ENCODE measurements at regions of chrX and their contacts with region 1.

Region 1: GRCh38 chrX:29044423-29045184 is 457.4 kb downstream of the IL1RAPL1 start:
- DNase-seq: no peak
- ATAC-seq: no peak
- H3K4me3 ChIP-seq: no peak overlapping the region
- H3K27ac ChIP-seq: no peak overlapping the region
- H3K4me1 ChIP-seq: no peaks in the 10 kb centered on the region
- H3K27me3 ChIP-seq: no peaks in the 10 kb centered on the region

Region 2: DNA sequence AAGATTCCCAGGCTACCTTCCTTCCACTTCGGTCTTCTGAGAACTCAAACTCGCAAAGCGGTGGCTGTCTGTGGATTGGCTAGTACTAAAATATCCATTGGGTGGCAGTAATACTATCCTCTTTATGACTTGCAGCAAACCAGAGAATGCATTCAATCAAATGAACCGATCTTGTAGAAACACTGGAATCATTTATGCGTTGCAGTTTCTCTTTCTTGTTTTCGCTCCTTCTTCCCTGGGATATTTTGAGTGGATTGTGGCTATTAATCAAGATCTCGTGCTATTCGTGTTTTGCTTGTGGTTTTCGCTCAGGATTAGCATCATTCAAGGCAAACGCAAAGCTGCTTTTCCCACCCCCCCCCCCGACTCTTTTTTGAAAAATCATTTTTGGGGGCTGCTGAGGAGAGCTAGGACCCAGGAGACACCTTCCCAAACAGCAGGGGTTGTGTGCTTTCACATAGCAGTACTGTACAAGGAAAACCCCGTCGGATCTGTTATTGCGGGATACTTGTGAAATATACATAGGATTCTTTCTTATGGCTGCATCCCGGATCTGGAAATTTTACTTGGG is 457.5 kb before region 1 on chrX and contains the start of gene IL1RAPL1:
- intact Hi-C with region 1: loop called in 1 of 4 experiments (anchors 5 kb)
- DNase-seq: no peak
- ATAC-seq: peak; percentile 81 to 84
- H3K4me3 ChIP-seq: peak within 1 kb of the TSS; percentile 58
- H3K27ac ChIP-seq: no peak within 1 kb of the TSS
- H3K4me1 ChIP-seq: no peaks in the 10 kb centered on the region
- H3K27me3 ChIP-seq: no peaks in the 10 kb centered on the region
- total RNA-seq, gene IL1RAPL1: 2.0 to 3.1 (median 2.4) TPM

Region 3: DNA sequence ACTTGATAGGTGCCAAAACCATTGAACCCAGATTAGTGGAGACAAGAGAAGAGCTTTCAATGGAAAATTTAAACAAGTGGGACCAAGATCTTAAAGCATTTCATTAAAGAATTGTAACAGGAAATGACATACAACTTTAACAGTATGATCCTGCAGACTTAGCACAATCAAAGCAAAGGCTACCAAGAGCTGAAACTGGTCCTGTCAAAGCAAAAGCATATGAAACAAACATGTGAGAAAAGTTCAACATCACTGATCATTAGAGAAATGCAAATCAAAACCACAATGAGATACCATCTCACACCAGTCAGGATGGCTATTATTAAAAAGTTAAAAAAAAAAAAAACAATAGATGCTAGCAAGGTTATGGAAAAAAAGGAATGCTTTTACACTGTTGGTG is 31.7 kb before region 1 on chrX:
- intact Hi-C with region 1: no loop called
- DNase-seq: no peak
- ATAC-seq: no peak
- H3K4me3 ChIP-seq: no peak overlapping the region
- H3K27ac ChIP-seq: no peak overlapping the region
- H3K4me1 ChIP-seq: no peaks in the 10 kb centered on the region
- H3K27me3 ChIP-seq: no peaks in the 10 kb centered on the region

Region 4: DNA sequence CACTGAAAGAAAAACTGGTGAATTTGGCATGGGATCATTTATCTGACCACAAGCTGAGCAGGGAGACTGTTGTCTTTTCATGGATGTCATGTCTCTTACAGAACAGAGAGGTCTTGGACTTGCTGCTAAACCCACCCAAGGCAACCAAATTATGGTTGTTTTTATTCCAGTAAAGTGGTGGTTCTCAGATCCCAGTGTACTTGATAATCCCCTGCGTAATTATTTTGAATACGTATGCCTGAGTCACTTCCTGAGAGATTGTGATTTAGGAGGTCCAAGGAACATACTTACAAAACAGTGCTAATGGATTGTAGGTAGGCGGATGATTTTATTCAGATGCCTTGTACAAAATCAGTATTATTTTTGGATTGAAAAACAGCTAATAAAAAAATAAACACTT is 128.3 kb after region 1 on chrX:
- intact Hi-C with region 1: no loop called
- DNase-seq: no peak
- ATAC-seq: no peak
- H3K4me3 ChIP-seq: no peak overlapping the region
- H3K27ac ChIP-seq: no peak overlapping the region
- H3K4me1 ChIP-seq: no peaks in the 10 kb centered on the region
- H3K27me3 ChIP-seq: no peaks in the 10 kb centered on the region